ENCODE measurements at regions of chr6 and their contacts with region 1.

Region 1: DNA sequence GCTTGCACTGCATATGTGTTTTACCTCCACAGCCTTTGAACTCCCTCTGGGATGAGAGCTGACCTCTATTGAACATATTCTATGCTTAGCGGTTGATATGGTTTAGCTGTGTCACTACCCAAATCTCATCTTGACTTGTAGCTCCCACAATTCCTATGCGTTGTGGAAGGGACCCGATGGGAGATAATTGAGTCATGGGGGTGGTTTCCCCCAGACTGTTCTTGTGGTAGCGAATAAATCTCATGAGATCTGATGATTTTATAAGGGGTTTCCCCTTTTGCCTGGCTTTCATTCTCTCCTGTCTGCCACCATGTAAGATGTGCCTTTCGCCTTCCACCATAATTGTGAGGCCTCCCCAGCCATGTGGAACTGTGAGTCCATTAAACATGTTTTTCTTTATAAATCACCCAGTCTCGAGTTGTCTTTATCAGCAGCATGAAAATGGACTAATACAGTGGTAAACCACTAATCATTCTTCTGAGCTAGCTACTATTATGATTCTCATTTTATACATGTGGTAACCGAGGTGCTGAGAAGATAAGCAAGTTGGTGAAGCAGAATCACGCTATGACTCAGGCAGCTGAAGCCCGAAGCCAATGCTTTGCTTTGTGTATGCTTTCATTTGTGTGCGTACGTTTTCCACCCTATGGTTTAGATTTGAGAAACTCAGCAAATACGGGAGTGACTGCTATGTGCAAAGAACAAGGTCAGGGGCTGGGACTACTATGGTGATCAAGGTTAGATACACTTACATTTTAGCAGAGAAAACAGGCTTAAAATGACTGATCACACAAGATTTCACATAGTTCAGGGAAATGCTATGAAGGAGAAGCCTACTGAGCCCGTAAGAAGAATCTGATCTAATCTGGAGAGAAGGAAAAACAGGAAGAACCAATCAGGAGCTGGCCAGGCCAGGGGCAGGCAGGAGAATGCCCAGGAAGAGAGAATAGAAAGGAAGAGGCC is 363.5 kb downstream of the ESR1 start:
- DNase-seq: peak; percentile 86
- H3K4me3 Mint-ChIP-seq: peak overlapping the region; percentile 60
- H3K27ac Mint-ChIP-seq: peak overlapping the region; percentile 96
- H3K4me1 Mint-ChIP-seq: peaks cover 54% of the 10 kb centered on the region
- H3K27me3 Mint-ChIP-seq: no peaks in the 10 kb centered on the region

Region 2: GRCh38 chr6:151451950-151452749 is 718.8 kb before region 1 on chr6 and contains the start of gene RMND1:
- CTCF ChIA-PET with region 1: no interaction called
- POLR2A ChIA-PET with region 1: no interaction called
- intact Hi-C with region 1: loop called (anchors 5 kb)
- DNase-seq: peak; percentile 100
- H3K4me3 Mint-ChIP-seq: peak within 1 kb of the TSS; percentile 94
- H3K27ac Mint-ChIP-seq: peak within 1 kb of the TSS; percentile 78
- H3K4me1 Mint-ChIP-seq: peaks cover 29% of the 10 kb centered on the region
- H3K27me3 Mint-ChIP-seq: peaks cover 3% of the 10 kb centered on the region
- total RNA-seq, gene RMND1: 22.6 to 23.0 TPM

Region 3: GRCh38 chr6:151475653-151476523 is 695.1 kb before region 1 on chr6:
- CTCF ChIA-PET with region 1: no interaction called
- POLR2A ChIA-PET with region 1: no interaction called
- intact Hi-C with region 1: no loop called
- DNase-seq: peak; percentile 38
- H3K4me3 Mint-ChIP-seq: no peak overlapping the region
- H3K27ac Mint-ChIP-seq: no peak overlapping the region
- H3K4me1 Mint-ChIP-seq: peaks cover 5% of the 10 kb centered on the region
- H3K27me3 Mint-ChIP-seq: no peaks in the 10 kb centered on the region

Region 4: GRCh38 chr6:151702851-151703611 is 468.0 kb before region 1 on chr6:
- CTCF ChIA-PET with region 1: no interaction called
- POLR2A ChIA-PET with region 1: interaction called, 5 read pairs
- intact Hi-C with region 1: loop called (anchors 1 kb)
- DNase-seq: no peak
- H3K4me3 Mint-ChIP-seq: no peak overlapping the region
- H3K27ac Mint-ChIP-seq: peak overlapping the region; percentile 56
- H3K4me1 Mint-ChIP-seq: peaks cover 44% of the 10 kb centered on the region
- H3K27me3 Mint-ChIP-seq: peaks cover 6% of the 10 kb centered on the region

Region 5: GRCh38 chr6:151962246-151962846 is 208.6 kb before region 1 on chr6:
- CTCF ChIA-PET with region 1: no interaction called
- POLR2A ChIA-PET with region 1: no interaction called
- intact Hi-C with region 1: loop called (anchors 2 kb)
- DNase-seq: peak; percentile 22
- H3K4me3 Mint-ChIP-seq: no peak overlapping the region
- H3K27ac Mint-ChIP-seq: peak overlapping the region; percentile 19
- H3K4me1 Mint-ChIP-seq: peaks cover 17% of the 10 kb centered on the region
- H3K27me3 Mint-ChIP-seq: peaks cover 16% of the 10 kb centered on the region

Region 6: GRCh38 chr6:152184917-152185574 is 14.1 kb after region 1 on chr6:
- CTCF ChIA-PET with region 1: interaction called, 16 read pairs
- POLR2A ChIA-PET with region 1: interaction called, 43 read pairs
- intact Hi-C with region 1: loop called (anchors 1 kb)
- DNase-seq: peak; percentile 39
- H3K4me3 Mint-ChIP-seq: peak overlapping the region; percentile 78
- H3K27ac Mint-ChIP-seq: peak overlapping the region; percentile 94
- H3K4me1 Mint-ChIP-seq: peaks cover 73% of the 10 kb centered on the region
- H3K27me3 Mint-ChIP-seq: no peaks in the 10 kb centered on the region

Region 7: GRCh38 chr6:152301764-152302568 is 131.0 kb after region 1 on chr6:
- CTCF ChIA-PET with region 1: no interaction called
- POLR2A ChIA-PET with region 1: interaction called, 4 read pairs
- intact Hi-C with region 1: loop called (anchors 1 kb)
- DNase-seq: peak; percentile 94
- H3K4me3 Mint-ChIP-seq: peak overlapping the region; percentile 99
- H3K27ac Mint-ChIP-seq: peak overlapping the region; percentile 95
- H3K4me1 Mint-ChIP-seq: peaks cover 31% of the 10 kb centered on the region
- H3K27me3 Mint-ChIP-seq: no peaks in the 10 kb centered on the region

Region 8: GRCh38 chr6:152386131-152386530 is 215.1 kb after region 1 on chr6:
- CTCF ChIA-PET with region 1: no interaction called
- POLR2A ChIA-PET with region 1: no interaction called
- intact Hi-C with region 1: no loop called
- DNase-seq: no peak
- H3K4me3 Mint-ChIP-seq: no peak overlapping the region
- H3K27ac Mint-ChIP-seq: no peak overlapping the region
- H3K4me1 Mint-ChIP-seq: no peaks in the 10 kb centered on the region
- H3K27me3 Mint-ChIP-seq: peaks cover 17% of the 10 kb centered on the region